ENCODE measurements at regions of chr9 and their contacts with region 1.

Region 1: GRCh38 chr9:133115448-133116345 is 5.3 kb downstream of the RALGDS start:
- DNase-seq: peak; percentile 65
- H3K4me3 Mint-ChIP-seq: peak overlapping the region; percentile 73
- H3K27ac Mint-ChIP-seq: peak overlapping the region; percentile 95
- H3K4me1 Mint-ChIP-seq: peaks cover 60% of the 10 kb centered on the region
- H3K27me3 Mint-ChIP-seq: no peaks in the 10 kb centered on the region

Region 2: GRCh38 chr9:131976157-131977108 is 1139.3 kb before region 1 on chr9:
- intact Hi-C with region 1: no loop called
- DNase-seq: no peak
- H3K4me3 Mint-ChIP-seq: no peak overlapping the region
- H3K27ac Mint-ChIP-seq: no peak overlapping the region
- H3K4me1 Mint-ChIP-seq: peaks cover 5% of the 10 kb centered on the region
- H3K27me3 Mint-ChIP-seq: no peaks in the 10 kb centered on the region

Region 3: GRCh38 chr9:133023117-133023890 is 92.4 kb before region 1 on chr9:
- intact Hi-C with region 1: loop called (anchors 1 kb)
- DNase-seq: peak; percentile 46
- H3K4me3 Mint-ChIP-seq: peak overlapping the region; percentile 39
- H3K27ac Mint-ChIP-seq: no peak overlapping the region
- H3K4me1 Mint-ChIP-seq: peaks cover 33% of the 10 kb centered on the region
- H3K27me3 Mint-ChIP-seq: peaks cover 4% of the 10 kb centered on the region

Region 4: GRCh38 chr9:133060417-133060841 is 55.3 kb before region 1 on chr9:
- intact Hi-C with region 1: no loop called
- DNase-seq: no peak
- H3K4me3 Mint-ChIP-seq: peak overlapping the region; percentile 15
- H3K27ac Mint-ChIP-seq: peak overlapping the region; percentile 86
- H3K4me1 Mint-ChIP-seq: peaks cover 44% of the 10 kb centered on the region
- H3K27me3 Mint-ChIP-seq: no peaks in the 10 kb centered on the region

Region 5: GRCh38 chr9:133133681-133134418 is 18.2 kb after region 1 on chr9:
- intact Hi-C with region 1: loop called (anchors 1 kb)
- DNase-seq: peak; percentile 91
- H3K4me3 Mint-ChIP-seq: peak overlapping the region; percentile 81
- H3K27ac Mint-ChIP-seq: peak overlapping the region; percentile 100
- H3K4me1 Mint-ChIP-seq: peaks cover 67% of the 10 kb centered on the region
- H3K27me3 Mint-ChIP-seq: no peaks in the 10 kb centered on the region